ENCODE measurements at regions of chr17 and their contacts with region 1.

Region 1: GRCh38 chr17:76182016-76182764 is 41.1 kb upstream of the FOXJ1 start:
- DNase-seq: peak; percentile 91
- H3K4me3 Mint-ChIP-seq: no peak overlapping the region
- H3K27ac Mint-ChIP-seq: peak overlapping the region; percentile 12
- H3K4me1 Mint-ChIP-seq: no peaks in the 10 kb centered on the region
- H3K27me3 Mint-ChIP-seq: no peaks in the 10 kb centered on the region
- CTCF ChIP-seq: peak; percentile 73

Region 2: GRCh38 chr17:75904749-75905521 is 277.3 kb before region 1 on chr17 and contains the start of gene MRPL38:
- CTCF ChIA-PET with region 1: no interaction called
- POLR2A ChIA-PET with region 1: no interaction called
- intact Hi-C with region 1: loop called (anchors 5 kb)
- DNase-seq: peak; percentile 93
- H3K4me3 Mint-ChIP-seq: peak within 1 kb of the TSS; percentile 91
- H3K27ac Mint-ChIP-seq: peak within 1 kb of the TSS; percentile 92
- H3K4me1 Mint-ChIP-seq: peaks cover 16% of the 10 kb centered on the region
- H3K27me3 Mint-ChIP-seq: no peaks in the 10 kb centered on the region
- CTCF ChIP-seq: peak; percentile 96
- total RNA-seq, gene MRPL38: 97.9 and 111 TPM in 2 replicates

Region 3: GRCh38 chr17:76014184-76014924 is 167.8 kb before region 1 on chr17:
- CTCF ChIA-PET with region 1: interaction called, 3 read pairs
- POLR2A ChIA-PET with region 1: no interaction called
- intact Hi-C with region 1: loop called (anchors 2 kb)
- DNase-seq: peak; percentile 63
- H3K4me3 Mint-ChIP-seq: no peak overlapping the region
- H3K27ac Mint-ChIP-seq: no peak overlapping the region
- H3K4me1 Mint-ChIP-seq: no peaks in the 10 kb centered on the region
- H3K27me3 Mint-ChIP-seq: no peaks in the 10 kb centered on the region
- CTCF ChIP-seq: peak; percentile 95

Region 4: DNA sequence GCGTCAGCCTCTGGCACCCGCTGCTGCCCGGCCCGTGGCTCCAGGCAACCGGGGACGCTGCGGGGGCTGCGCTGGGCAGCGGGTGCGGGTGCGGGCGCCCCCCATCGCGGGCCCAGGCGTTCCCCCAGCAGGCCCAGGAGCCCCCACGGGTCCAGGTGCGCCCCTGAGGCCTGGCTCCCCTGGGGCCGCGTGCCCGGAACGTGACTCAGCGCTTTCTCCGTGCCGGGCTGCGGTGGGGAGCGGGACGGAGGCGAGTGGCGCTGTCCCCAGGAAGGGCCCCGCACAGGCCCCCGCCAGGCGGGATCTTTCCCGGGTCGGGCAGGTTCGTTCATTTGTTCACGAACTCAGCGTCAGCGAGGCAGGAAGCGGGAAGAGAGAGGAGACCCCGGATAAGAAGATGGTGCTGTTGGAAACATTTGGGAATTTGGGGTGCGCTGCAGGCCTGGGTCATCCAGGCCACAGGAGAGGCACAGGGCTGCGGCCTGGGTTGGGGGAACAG is 60.2 kb before region 1 on chr17:
- CTCF ChIA-PET with region 1: interaction called, 6 read pairs
- POLR2A ChIA-PET with region 1: interaction called, 3 read pairs
- intact Hi-C with region 1: loop called (anchors 1 kb)
- DNase-seq: no peak
- H3K4me3 Mint-ChIP-seq: no peak overlapping the region
- H3K27ac Mint-ChIP-seq: no peak overlapping the region
- H3K4me1 Mint-ChIP-seq: no peaks in the 10 kb centered on the region
- H3K27me3 Mint-ChIP-seq: no peaks in the 10 kb centered on the region
- CTCF ChIP-seq: no peak

Region 5: GRCh38 chr17:76166168-76166567 is 16.0 kb before region 1 on chr17:
- CTCF ChIA-PET with region 1: interaction called, 13 read pairs
- POLR2A ChIA-PET with region 1: interaction called, 3 read pairs
- intact Hi-C with region 1: no loop called
- DNase-seq: no peak
- H3K4me3 Mint-ChIP-seq: no peak overlapping the region
- H3K27ac Mint-ChIP-seq: no peak overlapping the region
- H3K4me1 Mint-ChIP-seq: no peaks in the 10 kb centered on the region
- H3K27me3 Mint-ChIP-seq: no peaks in the 10 kb centered on the region
- CTCF ChIP-seq: no peak

Region 6: DNA sequence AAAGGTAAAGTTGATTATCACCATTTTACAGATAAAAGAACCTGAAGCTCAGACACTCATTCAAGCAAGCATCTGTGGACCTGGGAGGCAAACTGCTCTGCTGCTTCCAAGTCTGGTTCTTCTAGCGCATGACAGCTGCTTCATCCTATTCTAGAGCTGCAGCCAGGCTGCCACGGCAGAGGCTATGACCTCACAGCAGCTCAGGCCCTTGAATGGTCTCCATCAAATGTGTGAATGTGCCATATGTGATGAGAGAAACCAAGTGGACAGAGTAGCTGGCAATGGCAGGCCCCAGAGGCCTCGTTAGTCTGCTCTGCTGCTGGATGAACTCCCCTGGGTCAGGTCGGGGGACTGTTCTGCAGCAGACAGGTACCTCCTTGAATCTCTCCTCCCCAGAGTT is 10.5 kb before region 1 on chr17:
- CTCF ChIA-PET with region 1: interaction called, 13 read pairs
- POLR2A ChIA-PET with region 1: interaction called, 3 read pairs
- intact Hi-C with region 1: no loop called
- DNase-seq: no peak
- H3K4me3 Mint-ChIP-seq: no peak overlapping the region
- H3K27ac Mint-ChIP-seq: no peak overlapping the region
- H3K4me1 Mint-ChIP-seq: no peaks in the 10 kb centered on the region
- H3K27me3 Mint-ChIP-seq: no peaks in the 10 kb centered on the region
- CTCF ChIP-seq: no peak

Region 7: DNA sequence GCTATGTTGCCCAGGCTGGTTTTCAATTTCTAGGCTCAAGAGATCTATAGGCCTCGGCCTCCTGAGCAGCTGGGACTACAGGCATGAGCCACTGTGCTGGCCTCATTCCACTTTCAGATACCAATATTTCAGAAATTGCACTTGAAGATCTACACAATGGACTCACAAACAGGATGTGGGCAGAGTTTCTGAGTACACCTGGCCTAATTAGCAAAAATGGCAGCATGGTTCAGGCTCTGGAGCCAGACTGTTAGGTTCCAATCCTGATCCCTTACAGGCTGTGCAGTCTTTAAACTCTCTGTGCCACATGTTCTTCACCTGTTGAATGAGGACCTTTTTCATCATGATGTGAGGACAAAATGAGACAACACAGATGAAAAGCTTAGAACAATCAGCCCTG is 25.9 kb after region 1 on chr17:
- CTCF ChIA-PET with region 1: interaction called, 10 read pairs
- POLR2A ChIA-PET with region 1: interaction called, 4 read pairs
- intact Hi-C with region 1: no loop called
- DNase-seq: no peak
- H3K4me3 Mint-ChIP-seq: no peak overlapping the region
- H3K27ac Mint-ChIP-seq: no peak overlapping the region
- H3K4me1 Mint-ChIP-seq: peaks cover 10% of the 10 kb centered on the region
- H3K27me3 Mint-ChIP-seq: no peaks in the 10 kb centered on the region
- CTCF ChIP-seq: no peak

Measured in MCF 10A (cell line).